Sigmoid colon (tissue), 7 donors: ENCODE measurements at regions of chr19 and their contacts with region 1.

Region 1: GRCh38 chr19:4968462-4969291 is at the start of gene KDM4B:
- DNase-seq: peak; percentile 100
- H3K4me3 ChIP-seq: peak within 1 kb of the TSS; percentile 66 to 85 (median 78)
- H3K27ac ChIP-seq: peak within 1 kb of the TSS; percentile 71 to 80 (median 73)
- H3K4me1 ChIP-seq: peaks cover 0 to 45% (median 40%) of the 10 kb centered on the region in 4 donors
- H3K27me3 ChIP-seq: no peaks in the 10 kb centered on the region
- CTCF ChIP-seq: no peak
- EP300 ChIP-seq: no peak
- POLR2A ChIP-seq: no peak
- total RNA-seq, gene KDM4B: 20.7 to 46.5 (median 28.8) TPM

Region 2: DNA sequence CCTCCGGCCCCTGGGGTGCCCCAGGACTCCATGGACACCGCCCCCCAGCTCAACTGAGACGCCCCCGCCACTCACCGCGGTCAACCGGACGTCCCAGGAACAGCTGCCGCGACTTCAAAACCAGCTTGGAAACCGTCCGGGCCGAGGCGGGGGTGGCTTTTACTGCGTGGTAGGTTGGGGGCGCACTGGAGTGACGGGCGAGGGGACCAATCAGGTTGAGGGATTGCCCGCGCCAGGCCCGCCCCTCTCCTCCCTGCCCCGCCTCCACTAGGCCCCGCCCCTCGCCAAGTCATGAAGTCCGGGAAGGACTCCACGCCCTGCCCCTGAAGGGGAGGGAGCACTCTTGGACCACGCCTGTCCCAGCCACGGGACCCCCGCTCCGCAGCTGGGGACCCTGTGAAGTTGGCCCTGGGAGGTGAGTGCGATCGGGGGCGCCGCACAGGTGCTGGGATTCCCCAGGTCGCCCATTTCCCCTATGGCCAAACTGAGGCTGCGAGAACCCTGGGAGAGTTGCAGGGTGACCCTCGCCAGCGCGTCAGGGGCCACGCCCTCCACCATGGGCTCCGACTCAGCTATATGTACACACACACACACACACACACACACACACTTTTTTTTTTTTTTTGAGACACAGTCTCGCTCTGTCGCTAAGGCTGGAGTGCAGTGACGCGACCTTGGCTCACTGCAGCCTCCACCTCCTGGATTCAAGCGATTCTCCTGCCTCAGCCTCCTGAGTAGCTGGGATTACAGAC is 101.0 kb before region 1 on chr19 and contains the start of gene PLIN3:
- intact Hi-C with region 1: loop called (anchors 5 kb)
- DNase-seq: peak; percentile 99
- H3K4me3 ChIP-seq: peak within 1 kb of the TSS; percentile 55 to 94 (median 84)
- H3K27ac ChIP-seq: peak within 1 kb of the TSS; percentile 83 to 89 (median 88)
- H3K4me1 ChIP-seq: peaks cover 0 to 19% (median 8%) of the 10 kb centered on the region in 4 donors
- H3K27me3 ChIP-seq: no peaks in the 10 kb centered on the region
- CTCF ChIP-seq: no peak
- EP300 ChIP-seq: no peak
- POLR2A ChIP-seq: peak in 1 of 2 donors; percentile 49
- total RNA-seq, gene PLIN3: 20.3 to 34.2 (median 26.7) TPM

Region 3: GRCh38 chr19:4939466-4939865 is 29.2 kb before region 1 on chr19:
- intact Hi-C with region 1: no loop called
- DNase-seq: no peak
- H3K4me3 ChIP-seq: no peak overlapping the region
- H3K27ac ChIP-seq: no peak overlapping the region
- H3K4me1 ChIP-seq: no peaks in the 10 kb centered on the region
- H3K27me3 ChIP-seq: no peaks in the 10 kb centered on the region
- CTCF ChIP-seq: no peak
- EP300 ChIP-seq: no peak
- POLR2A ChIP-seq: no peak